ENCODE measurements at regions of chr1 and their contacts with region 1.

Region 1: GRCh38 chr1:153510984-153511410 is 24.8 kb downstream of the S100A6 start:
- DNase-seq: peak; percentile 88
- ATAC-seq: peak; percentile 94
- H3K4me3 Mint-ChIP-seq: no peak overlapping the region
- H3K27ac Mint-ChIP-seq: peak overlapping the region; percentile 66
- H3K4me1 Mint-ChIP-seq: peaks cover 7% of the 10 kb centered on the region
- H3K27me3 Mint-ChIP-seq: no peaks in the 10 kb centered on the region
- CTCF ChIP-seq: peak; percentile 99

Region 2: DNA sequence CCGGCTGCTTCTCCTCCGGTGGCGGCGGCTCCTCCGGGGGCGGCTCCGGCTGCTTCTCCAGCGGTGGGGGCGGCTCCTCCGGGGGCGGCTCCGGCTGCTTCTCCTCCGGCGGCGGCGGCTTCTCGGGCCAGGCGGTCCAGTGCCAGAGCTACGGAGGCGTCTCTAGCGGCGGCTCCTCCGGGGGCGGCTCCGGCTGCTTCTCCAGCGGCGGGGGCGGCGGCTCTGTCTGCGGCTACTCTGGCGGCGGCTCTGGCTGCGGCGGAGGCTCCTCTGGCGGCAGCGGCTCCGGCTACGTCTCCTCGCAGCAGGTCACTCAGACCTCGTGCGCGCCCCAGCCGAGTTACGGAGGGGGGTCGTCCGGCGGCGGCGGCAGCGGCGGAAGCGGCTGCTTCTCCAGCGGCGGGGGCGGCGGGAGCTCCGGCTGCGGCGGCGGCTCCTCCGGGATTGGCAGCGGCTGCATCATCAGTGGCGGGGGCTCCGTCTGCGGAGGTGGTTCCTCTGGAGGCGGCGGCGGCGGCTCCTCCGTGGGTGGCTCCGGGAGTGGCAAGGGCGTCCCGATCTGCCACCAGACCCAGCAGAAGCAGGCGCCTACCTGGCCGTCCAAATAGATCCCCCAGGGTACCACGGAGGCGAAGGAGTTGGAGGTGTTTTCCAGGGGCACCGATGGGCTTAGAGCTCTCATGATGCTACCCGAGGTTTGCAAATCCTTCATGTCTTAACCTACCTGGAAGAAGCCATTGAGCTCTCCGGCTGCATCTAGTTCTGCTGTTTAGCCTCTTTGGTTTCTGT is 249.5 kb before region 1 on chr1:
- CTCF ChIA-PET with region 1: no interaction called
- POLR2A ChIA-PET with region 1: no interaction called
- intact Hi-C with region 1: no loop called
- DNase-seq: peak; percentile 17
- ATAC-seq: no peak
- H3K4me3 Mint-ChIP-seq: peak overlapping the region; percentile 46
- H3K27ac Mint-ChIP-seq: no peak overlapping the region
- H3K4me1 Mint-ChIP-seq: peaks cover 22% of the 10 kb centered on the region
- H3K27me3 Mint-ChIP-seq: peaks cover 52% of the 10 kb centered on the region
- CTCF ChIP-seq: no peak

Region 3: GRCh38 chr1:153526132-153526543 is 15.1 kb after region 1 on chr1:
- CTCF ChIA-PET with region 1: interaction called, 50 read pairs
- POLR2A ChIA-PET with region 1: interaction called, 5 read pairs
- intact Hi-C with region 1: no loop called
- DNase-seq: no peak
- ATAC-seq: no peak
- H3K4me3 Mint-ChIP-seq: no peak overlapping the region
- H3K27ac Mint-ChIP-seq: no peak overlapping the region
- H3K4me1 Mint-ChIP-seq: peaks cover 13% of the 10 kb centered on the region
- H3K27me3 Mint-ChIP-seq: no peaks in the 10 kb centered on the region
- CTCF ChIP-seq: no peak

Region 4: GRCh38 chr1:153566440-153567379 is 55.7 kb after region 1 on chr1:
- CTCF ChIA-PET with region 1: interaction called, 81 read pairs
- POLR2A ChIA-PET with region 1: interaction called, 7 read pairs
- intact Hi-C with region 1: loop called (anchors 1 kb)
- DNase-seq: peak; percentile 95
- ATAC-seq: peak; percentile 87
- H3K4me3 Mint-ChIP-seq: no peak overlapping the region
- H3K27ac Mint-ChIP-seq: peak overlapping the region; percentile 84
- H3K4me1 Mint-ChIP-seq: peaks cover 38% of the 10 kb centered on the region
- H3K27me3 Mint-ChIP-seq: no peaks in the 10 kb centered on the region
- CTCF ChIP-seq: no peak

Region 5: DNA sequence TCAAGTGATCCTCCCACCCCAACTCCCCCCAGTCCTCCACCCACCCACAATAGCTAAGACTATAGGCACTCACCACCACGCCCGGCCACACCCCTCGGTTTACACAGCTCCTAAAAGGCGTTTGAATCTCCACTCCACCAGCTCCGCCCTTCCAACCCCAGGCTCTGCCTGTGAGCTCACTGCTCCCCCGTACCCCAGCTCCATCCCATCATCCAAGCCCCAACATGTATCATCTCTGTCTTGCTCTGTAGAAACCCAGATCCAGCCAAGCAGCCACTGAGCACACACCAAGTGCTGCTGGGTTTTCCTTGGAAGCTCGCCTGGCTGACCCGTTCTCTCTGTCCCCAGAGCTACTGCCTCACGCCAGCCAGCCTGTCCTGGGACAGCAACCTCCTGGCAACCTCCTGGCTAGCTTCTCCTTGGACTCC is 66.6 kb after region 1 on chr1:
- CTCF ChIA-PET with region 1: interaction called, 45 read pairs
- POLR2A ChIA-PET with region 1: no interaction called
- intact Hi-C with region 1: no loop called
- DNase-seq: no peak
- ATAC-seq: no peak
- H3K4me3 Mint-ChIP-seq: no peak overlapping the region
- H3K27ac Mint-ChIP-seq: no peak overlapping the region
- H3K4me1 Mint-ChIP-seq: peaks cover 8% of the 10 kb centered on the region
- H3K27me3 Mint-ChIP-seq: peaks cover 20% of the 10 kb centered on the region
- CTCF ChIP-seq: no peak

Region 6: GRCh38 chr1:153617675-153618074 is 106.7 kb after region 1 on chr1:
- CTCF ChIA-PET with region 1: interaction called, 88 read pairs
- POLR2A ChIA-PET with region 1: no interaction called
- intact Hi-C with region 1: loop called (anchors 2 kb)
- DNase-seq: peak; percentile 87
- ATAC-seq: peak; percentile 96
- H3K4me3 Mint-ChIP-seq: no peak overlapping the region
- H3K27ac Mint-ChIP-seq: no peak overlapping the region
- H3K4me1 Mint-ChIP-seq: peaks cover 5% of the 10 kb centered on the region
- H3K27me3 Mint-ChIP-seq: no peaks in the 10 kb centered on the region
- CTCF ChIP-seq: peak; percentile 73

Region 7: DNA sequence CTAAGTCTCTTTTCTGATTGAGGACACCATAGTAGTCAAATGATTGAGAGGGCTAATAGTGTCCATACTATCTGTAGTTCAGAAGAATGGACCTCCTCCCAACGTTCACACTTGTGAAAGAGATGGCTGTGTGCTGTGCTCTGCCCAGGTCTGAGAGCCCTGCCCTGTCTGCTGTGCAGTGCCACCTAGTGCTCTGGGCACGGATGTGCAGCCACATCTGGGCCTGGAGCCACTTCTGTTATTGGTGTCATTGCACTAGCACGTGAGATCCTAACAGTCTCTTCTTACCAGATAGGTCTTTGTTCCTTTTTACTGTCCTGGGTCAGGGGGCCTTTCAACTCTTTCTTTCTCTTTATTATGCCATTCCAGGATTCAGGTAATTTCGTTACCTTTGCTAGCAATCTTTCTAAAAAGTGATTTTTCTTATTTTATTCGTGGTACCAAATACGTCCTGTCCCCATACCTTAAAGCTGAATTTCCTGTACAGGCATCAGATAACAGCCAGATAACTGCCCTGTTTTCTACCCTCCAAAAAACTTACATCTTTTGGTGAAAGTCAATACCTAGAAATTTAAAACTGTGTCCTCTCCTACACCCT is 238.5 kb after region 1 on chr1:
- CTCF ChIA-PET with region 1: interaction called, 5 read pairs
- POLR2A ChIA-PET with region 1: no interaction called
- intact Hi-C with region 1: loop called (anchors 5 kb)
- DNase-seq: peak; percentile 86
- ATAC-seq: peak; percentile 100
- H3K4me3 Mint-ChIP-seq: no peak overlapping the region
- H3K27ac Mint-ChIP-seq: no peak overlapping the region
- H3K4me1 Mint-ChIP-seq: peaks cover 5% of the 10 kb centered on the region
- H3K27me3 Mint-ChIP-seq: no peaks in the 10 kb centered on the region
- CTCF ChIP-seq: peak; percentile 91